Aorta (tissue), 5 donors: ENCODE measurements at regions of chr2 and their contacts with region 1.

Region 1: GRCh38 chr2:237413777-237414661 is at the start of gene COL6A3:
- DNase-seq: peak in 1 of 2 donors; percentile 84
- ATAC-seq: peak; percentile 75
- H3K4me3 ChIP-seq: peak within 1 kb of the TSS; percentile 43 to 67
- H3K27ac ChIP-seq: peak within 1 kb of the TSS in 1 of 2 donors; percentile 59
- H3K4me1 ChIP-seq: no peaks in the 10 kb centered on the region
- H3K27me3 ChIP-seq: no peaks in the 10 kb centered on the region
- total RNA-seq, gene COL6A3: 190 to 289 TPM

Region 2: GRCh38 chr2:236803621-236804020 is 610.4 kb before region 1 on chr2:
- intact Hi-C with region 1: no loop called
- DNase-seq: peak in 1 of 2 donors; percentile 68
- ATAC-seq: no peak
- H3K4me3 ChIP-seq: no peak overlapping the region
- H3K27ac ChIP-seq: no peak overlapping the region
- H3K4me1 ChIP-seq: no peaks in the 10 kb centered on the region
- H3K27me3 ChIP-seq: no peaks in the 10 kb centered on the region

Region 3: GRCh38 chr2:237012577-237013267 is 401.3 kb before region 1 on chr2:
- intact Hi-C with region 1: no loop called
- DNase-seq: no peak
- ATAC-seq: no peak
- H3K4me3 ChIP-seq: no peak overlapping the region
- H3K27ac ChIP-seq: no peak overlapping the region
- H3K4me1 ChIP-seq: no peaks in the 10 kb centered on the region
- H3K27me3 ChIP-seq: no peaks in the 10 kb centered on the region

Region 4: DNA sequence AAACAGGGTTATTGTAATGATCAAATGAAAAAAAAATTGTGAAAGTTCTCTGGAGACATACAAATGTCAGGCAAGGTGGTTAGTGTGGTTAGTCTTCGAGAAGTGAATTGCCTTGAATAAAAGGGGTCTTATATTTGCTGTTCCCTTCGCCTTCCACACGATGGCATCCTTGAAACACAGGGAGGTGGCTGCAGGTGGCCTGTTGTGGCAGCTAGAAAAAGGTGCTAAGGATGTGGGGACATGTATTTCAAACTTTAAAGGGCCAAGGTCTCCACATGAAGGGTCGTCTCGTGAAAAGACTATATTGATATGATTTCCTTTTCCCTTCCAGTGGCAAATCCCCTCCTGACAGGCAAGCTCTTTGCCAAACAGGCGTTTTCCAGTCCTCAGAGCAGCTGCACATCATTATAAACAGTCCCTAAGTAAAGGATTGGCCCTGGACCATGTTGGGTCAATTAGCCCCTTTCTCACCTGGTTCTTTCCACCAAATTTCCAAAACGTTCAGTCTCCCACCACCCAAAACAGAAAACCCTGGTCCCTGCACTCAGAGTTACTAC is 259.9 kb before region 1 on chr2:
- intact Hi-C with region 1: loop called in 1 of 2 experiments (anchors 5 kb)
- DNase-seq: no peak
- ATAC-seq: no peak
- H3K4me3 ChIP-seq: no peak overlapping the region
- H3K27ac ChIP-seq: no peak overlapping the region
- H3K4me1 ChIP-seq: no peaks in the 10 kb centered on the region
- H3K27me3 ChIP-seq: no peaks in the 10 kb centered on the region

Region 5: DNA sequence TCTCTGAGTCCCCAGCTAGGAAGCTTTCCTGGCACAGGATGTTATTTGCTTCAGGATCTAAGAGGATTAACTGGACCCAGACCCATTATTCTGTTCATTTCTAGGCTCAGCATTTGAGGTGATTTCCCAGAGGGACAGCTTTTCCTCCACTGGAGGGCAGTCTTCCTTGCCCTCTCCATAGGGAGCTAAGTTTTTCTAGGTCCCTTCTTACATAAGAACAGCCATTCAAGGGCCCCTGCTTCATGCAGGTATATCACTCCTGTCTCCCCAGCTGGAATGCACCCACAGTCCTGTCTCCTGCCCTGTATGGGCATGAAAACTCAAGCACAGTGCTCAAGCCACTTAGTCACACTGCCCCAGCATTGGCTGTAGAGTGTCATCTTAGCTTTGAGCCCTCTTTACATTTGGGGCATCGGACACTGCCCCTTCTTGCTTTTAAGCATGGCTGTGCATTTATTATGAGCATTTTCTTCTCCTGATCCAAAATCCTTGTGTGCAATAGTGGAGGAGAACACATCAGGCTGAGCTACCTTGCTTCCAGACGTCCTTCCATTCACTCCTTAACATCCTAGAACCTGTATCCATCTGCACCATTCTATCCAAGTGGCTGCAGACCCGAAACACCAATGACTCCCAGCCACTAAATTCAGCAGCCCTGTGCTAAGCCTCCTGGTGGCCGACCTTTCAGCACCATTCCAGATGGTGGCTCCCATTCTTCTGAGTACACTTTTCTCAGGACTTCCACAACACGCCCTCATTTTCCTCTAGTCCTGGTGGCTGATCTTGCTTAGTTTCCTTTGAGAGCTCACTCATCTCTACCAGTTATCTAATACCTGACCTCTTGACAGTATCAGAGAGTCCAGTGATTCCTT is 248.4 kb before region 1 on chr2:
- intact Hi-C with region 1: loop called (anchors 1 to 5 kb)
- DNase-seq: no peak
- ATAC-seq: no peak
- H3K4me3 ChIP-seq: no peak overlapping the region
- H3K27ac ChIP-seq: no peak overlapping the region
- H3K4me1 ChIP-seq: no peaks in the 10 kb centered on the region
- H3K27me3 ChIP-seq: no peaks in the 10 kb centered on the region

Region 6: DNA sequence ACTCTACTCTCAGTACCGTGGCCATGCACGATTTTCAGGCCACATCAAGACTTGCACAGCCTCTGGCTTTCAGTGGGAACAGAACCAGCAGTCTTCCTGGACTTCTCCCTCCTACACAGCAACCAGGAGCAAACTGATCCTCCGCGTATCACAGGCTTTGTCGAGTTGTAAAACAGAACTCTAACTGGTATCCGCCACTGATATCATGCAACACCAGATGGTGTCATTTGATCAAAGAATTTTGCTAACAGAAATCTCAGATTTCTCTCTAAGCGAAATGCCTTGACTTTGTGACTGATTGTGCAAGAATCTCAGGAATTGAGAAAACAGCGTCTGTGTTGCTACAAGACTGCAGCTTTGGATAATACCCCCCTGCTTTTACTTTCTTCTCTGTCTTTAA is 242.6 kb before region 1 on chr2:
- intact Hi-C with region 1: loop called (anchors 1 to 5 kb)
- DNase-seq: no peak
- ATAC-seq: peak; percentile 91
- H3K4me3 ChIP-seq: peak overlapping the region in 1 of 2 donors; percentile 41
- H3K27ac ChIP-seq: peak overlapping the region in 1 of 2 donors; percentile 86
- H3K4me1 ChIP-seq: peaks cover 0 to 2% of the 10 kb centered on the region in 2 donors
- H3K27me3 ChIP-seq: no peaks in the 10 kb centered on the region

Region 7: DNA sequence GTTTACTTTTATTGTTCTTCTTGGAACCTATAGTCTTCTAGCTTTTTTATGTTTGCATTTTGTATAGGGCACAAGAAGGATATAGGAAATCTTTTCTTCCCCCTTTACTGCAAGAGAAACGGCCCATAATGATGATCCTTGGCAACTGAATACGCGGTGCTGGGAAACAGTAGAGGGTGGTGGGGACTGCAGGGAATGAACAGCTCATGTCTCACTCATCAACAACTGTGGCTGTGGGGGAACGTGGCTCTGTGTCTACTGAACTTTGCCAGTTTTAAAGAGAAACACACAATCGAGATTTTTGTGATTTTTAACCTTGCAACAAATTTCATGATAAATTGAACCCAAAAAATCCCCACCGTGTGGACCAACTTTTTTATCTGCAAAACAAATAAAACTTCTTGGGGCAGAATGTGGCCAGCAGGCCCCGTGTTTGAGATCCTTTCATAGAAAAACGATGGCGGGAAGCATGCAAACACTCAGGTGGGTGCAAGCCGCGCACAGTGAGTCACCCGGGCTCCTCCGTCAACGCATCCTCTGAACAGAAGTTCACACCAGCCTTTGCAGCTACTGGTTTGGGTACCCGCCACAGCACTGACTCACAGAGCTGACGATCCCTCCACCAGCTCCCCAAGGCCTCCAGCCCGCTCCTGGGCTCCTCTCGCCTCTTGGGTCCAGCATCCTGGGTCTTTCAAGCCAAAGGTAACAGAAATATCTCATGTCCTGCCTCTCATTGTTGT is 149.4 kb before region 1 on chr2:
- intact Hi-C with region 1: no loop called
- DNase-seq: peak in 1 of 2 donors; percentile 65
- ATAC-seq: no peak
- H3K4me3 ChIP-seq: no peak overlapping the region
- H3K27ac ChIP-seq: no peak overlapping the region
- H3K4me1 ChIP-seq: no peaks in the 10 kb centered on the region
- H3K27me3 ChIP-seq: no peaks in the 10 kb centered on the region

Region 8: DNA sequence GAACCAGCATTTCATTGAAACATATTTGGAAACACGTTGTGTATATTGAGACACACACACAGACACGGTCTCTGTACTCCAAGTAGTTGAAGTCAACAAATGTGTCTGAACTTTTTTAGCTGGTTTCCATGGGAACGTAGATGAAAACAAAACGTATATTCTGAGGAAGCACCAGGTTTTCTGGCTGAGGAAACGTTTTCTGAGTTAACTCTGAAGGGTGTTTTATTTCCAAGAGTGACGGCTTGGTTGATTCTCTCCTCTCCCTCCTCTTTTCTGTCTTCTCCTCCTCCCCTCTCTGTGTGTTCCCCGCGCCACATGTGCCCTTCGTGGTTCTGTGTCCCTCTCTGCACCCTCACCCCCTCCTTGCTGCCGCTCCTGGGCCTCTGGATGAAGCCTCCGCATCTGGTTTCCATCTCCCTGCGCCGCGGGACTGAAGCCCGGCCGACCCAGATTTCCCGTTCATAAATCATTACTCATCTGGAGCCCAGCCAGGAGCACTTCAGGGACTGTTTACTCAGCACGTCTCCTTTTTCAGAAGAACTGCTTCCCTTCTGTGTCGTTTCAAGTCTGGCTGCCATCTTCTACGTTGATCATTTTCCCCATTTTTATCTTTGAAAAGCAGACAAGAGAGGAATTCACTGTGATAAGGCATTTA is 122.8 kb before region 1 on chr2:
- intact Hi-C with region 1: loop called in 1 of 2 experiments (anchors 10 kb)
- DNase-seq: peak; percentile 94 to 95
- ATAC-seq: peak; percentile 91
- H3K4me3 ChIP-seq: no peak overlapping the region
- H3K27ac ChIP-seq: peak overlapping the region; percentile 50 to 57
- H3K4me1 ChIP-seq: no peaks in the 10 kb centered on the region
- H3K27me3 ChIP-seq: no peaks in the 10 kb centered on the region

Region 9: GRCh38 chr2:237315170-237315828 is 98.7 kb before region 1 on chr2:
- intact Hi-C with region 1: loop called in 1 of 2 experiments (anchors 5 kb)
- DNase-seq: peak; percentile 93 to 94
- ATAC-seq: peak; percentile 94
- H3K4me3 ChIP-seq: no peak overlapping the region
- H3K27ac ChIP-seq: peak overlapping the region; percentile 97 to 99
- H3K4me1 ChIP-seq: peaks cover 0 to 3% of the 10 kb centered on the region in 2 donors
- H3K27me3 ChIP-seq: no peaks in the 10 kb centered on the region